Activated CD4-positive, alpha-beta T cell treated with anti-CD3 and anti-CD28 coated beads for 36 hours (primary cell): ENCODE measurements at regions of chr9 and their contacts with region 1.

Region 1: DNA sequence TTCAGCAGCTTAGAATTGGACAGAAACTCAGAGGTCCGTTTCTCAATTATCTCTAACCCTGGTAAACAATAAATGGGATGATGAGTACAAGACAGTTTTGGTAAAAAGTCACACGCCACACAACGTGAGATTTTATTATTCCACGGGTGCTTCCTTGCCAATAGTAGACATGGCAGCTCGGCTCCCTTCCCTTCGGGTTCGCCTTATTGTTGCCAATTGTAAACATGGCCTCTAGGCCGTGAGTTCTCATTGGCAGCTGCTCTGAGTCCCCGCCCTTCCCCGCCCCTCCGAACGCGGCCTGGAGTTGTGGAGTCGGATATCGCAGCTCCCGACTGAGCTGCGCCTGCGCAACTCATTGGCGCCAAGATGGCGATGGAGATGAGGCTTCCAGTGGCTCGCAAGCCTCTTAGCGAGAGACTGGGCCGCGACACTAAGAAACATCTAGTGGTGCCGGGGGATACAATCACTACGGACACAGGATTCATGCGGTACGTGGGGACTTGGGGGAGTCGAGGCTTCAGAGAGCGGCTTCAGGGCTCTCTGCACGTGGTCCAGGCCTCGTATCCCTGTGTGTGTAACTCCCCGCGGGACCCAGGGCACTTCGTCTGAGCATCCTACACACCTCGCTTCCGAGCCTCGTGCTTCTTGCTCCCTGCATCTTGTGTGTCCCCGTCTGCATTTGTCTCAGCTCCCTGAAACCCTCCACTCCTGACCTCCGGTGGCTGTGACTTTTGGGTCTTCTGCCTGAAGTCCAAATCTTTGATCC is at the start of gene EXOSC2:
- DNase-seq: peak; percentile 99
- ATAC-seq: peak; percentile 98
- H3K4me3 Mint-ChIP-seq: peak within 1 kb of the TSS; percentile 97
- H3K27ac Mint-ChIP-seq: peak within 1 kb of the TSS; percentile 98
- H3K4me1 Mint-ChIP-seq: peaks cover 44% of the 10 kb centered on the region
- H3K27me3 Mint-ChIP-seq: no peaks in the 10 kb centered on the region
- total RNA-seq, gene EXOSC2: 67.9 to 86.0 TPM

Region 2: GRCh38 chr9:129823935-129824601 is 869.5 kb before region 1 on chr9 and contains the start of gene TOR1A:
- CTCF ChIA-PET with region 1: no interaction called
- POLR2A ChIA-PET with region 1: no interaction called
- intact Hi-C with region 1: loop called in 1 of 2 experiments (anchors 1 kb)
- DNase-seq: peak; percentile 97
- ATAC-seq: peak; percentile 93
- H3K4me3 Mint-ChIP-seq: peak within 1 kb of the TSS; percentile 82
- H3K27ac Mint-ChIP-seq: peak within 1 kb of the TSS; percentile 63
- H3K4me1 Mint-ChIP-seq: peaks cover 14% of the 10 kb centered on the region
- H3K27me3 Mint-ChIP-seq: no peaks in the 10 kb centered on the region
- total RNA-seq, gene TOR1A: 34.9 to 39.7 TPM

Region 3: DNA sequence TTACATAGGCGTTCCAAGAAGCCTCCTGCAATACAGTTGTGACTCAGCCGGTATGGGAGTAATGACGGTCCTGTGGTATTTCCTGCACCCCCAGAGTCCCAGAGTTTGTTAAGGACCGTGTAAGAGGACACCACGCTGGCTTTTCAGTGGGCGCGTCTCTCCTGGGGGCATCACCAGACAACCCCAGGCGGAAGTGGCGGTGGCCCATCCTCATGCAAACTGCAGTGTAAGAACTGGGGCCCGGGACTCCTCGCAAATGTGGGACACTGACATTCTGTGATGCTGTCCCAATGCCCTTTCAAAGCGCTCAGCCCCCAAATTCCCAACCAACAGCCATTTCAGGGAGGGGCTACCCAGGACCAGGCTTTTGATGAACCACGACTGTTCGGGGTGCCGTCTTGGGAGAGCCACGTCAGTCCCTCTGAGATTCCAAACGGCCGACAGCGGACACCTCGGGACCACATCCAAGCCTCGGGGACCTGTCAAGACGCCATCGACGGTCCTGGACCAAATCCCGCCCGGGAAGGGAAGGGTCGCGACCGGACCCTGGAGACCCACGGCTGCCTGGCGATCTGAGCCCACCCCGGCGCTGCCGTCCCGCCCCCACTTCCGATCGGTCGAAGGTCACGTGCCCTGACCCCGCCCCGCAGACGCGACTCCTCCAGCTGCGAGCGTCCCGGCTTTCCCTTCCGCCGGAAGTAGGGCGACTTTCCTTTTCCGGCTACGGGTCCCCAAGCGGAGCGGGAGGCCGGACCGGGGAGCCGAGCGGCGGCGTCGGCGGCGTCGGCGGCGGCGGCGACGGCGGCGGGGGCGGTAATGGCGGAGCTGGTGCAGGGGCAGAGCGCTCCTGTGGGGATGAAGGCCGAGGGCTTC is 114.5 kb before region 1 on chr9 and contains the start of gene FUBP3:
- CTCF ChIA-PET with region 1: interaction called, 3 read pairs
- POLR2A ChIA-PET with region 1: interaction called, 3 read pairs
- intact Hi-C with region 1: loop called in 1 of 2 experiments (anchors 1 kb)
- DNase-seq: peak; percentile 96
- ATAC-seq: peak; percentile 94
- H3K4me3 Mint-ChIP-seq: peak within 1 kb of the TSS; percentile 90
- H3K27ac Mint-ChIP-seq: peak within 1 kb of the TSS; percentile 89
- H3K4me1 Mint-ChIP-seq: peaks cover 32% of the 10 kb centered on the region
- H3K27me3 Mint-ChIP-seq: no peaks in the 10 kb centered on the region
- total RNA-seq, gene FUBP3: 36.4 to 38.5 TPM

Region 4: GRCh38 chr9:130682490-130683121 is 11.0 kb before region 1 on chr9:
- CTCF ChIA-PET with region 1: interaction called, 26 read pairs
- POLR2A ChIA-PET with region 1: interaction called, 3 read pairs
- intact Hi-C with region 1: no loop called
- DNase-seq: peak; percentile 78
- ATAC-seq: peak; percentile 30
- H3K4me3 Mint-ChIP-seq: peak overlapping the region; percentile 81
- H3K27ac Mint-ChIP-seq: peak overlapping the region; percentile 77
- H3K4me1 Mint-ChIP-seq: peaks cover 5% of the 10 kb centered on the region
- H3K27me3 Mint-ChIP-seq: peaks cover 4% of the 10 kb centered on the region

Region 5: GRCh38 chr9:130707225-130707976 is 13.8 kb after region 1 on chr9:
- CTCF ChIA-PET with region 1: interaction called, 35 read pairs
- POLR2A ChIA-PET with region 1: interaction called, 9 read pairs
- intact Hi-C with region 1: loop called (anchors 1 to 2 kb)
- DNase-seq: peak; percentile 82
- ATAC-seq: peak; percentile 33
- H3K4me3 Mint-ChIP-seq: no peak overlapping the region
- H3K27ac Mint-ChIP-seq: no peak overlapping the region
- H3K4me1 Mint-ChIP-seq: peaks cover 5% of the 10 kb centered on the region
- H3K27me3 Mint-ChIP-seq: no peaks in the 10 kb centered on the region

Region 6: GRCh38 chr9:130741831-130742449 is 48.3 kb after region 1 on chr9:
- CTCF ChIA-PET with region 1: no interaction called
- POLR2A ChIA-PET with region 1: no interaction called
- intact Hi-C with region 1: no loop called
- DNase-seq: peak; percentile 31
- ATAC-seq: peak; percentile 90
- H3K4me3 Mint-ChIP-seq: no peak overlapping the region
- H3K27ac Mint-ChIP-seq: no peak overlapping the region
- H3K4me1 Mint-ChIP-seq: peaks cover 7% of the 10 kb centered on the region
- H3K27me3 Mint-ChIP-seq: no peaks in the 10 kb centered on the region

Region 7: GRCh38 chr9:131046581-131047202 is 353.1 kb after region 1 on chr9:
- CTCF ChIA-PET with region 1: no interaction called
- POLR2A ChIA-PET with region 1: no interaction called
- intact Hi-C with region 1: loop called in 1 of 2 experiments (anchors 5 kb)
- DNase-seq: peak; percentile 86
- ATAC-seq: peak; percentile 89
- H3K4me3 Mint-ChIP-seq: no peak overlapping the region
- H3K27ac Mint-ChIP-seq: no peak overlapping the region
- H3K4me1 Mint-ChIP-seq: peaks cover 10% of the 10 kb centered on the region
- H3K27me3 Mint-ChIP-seq: peaks cover 3% of the 10 kb centered on the region

Region 8: DNA sequence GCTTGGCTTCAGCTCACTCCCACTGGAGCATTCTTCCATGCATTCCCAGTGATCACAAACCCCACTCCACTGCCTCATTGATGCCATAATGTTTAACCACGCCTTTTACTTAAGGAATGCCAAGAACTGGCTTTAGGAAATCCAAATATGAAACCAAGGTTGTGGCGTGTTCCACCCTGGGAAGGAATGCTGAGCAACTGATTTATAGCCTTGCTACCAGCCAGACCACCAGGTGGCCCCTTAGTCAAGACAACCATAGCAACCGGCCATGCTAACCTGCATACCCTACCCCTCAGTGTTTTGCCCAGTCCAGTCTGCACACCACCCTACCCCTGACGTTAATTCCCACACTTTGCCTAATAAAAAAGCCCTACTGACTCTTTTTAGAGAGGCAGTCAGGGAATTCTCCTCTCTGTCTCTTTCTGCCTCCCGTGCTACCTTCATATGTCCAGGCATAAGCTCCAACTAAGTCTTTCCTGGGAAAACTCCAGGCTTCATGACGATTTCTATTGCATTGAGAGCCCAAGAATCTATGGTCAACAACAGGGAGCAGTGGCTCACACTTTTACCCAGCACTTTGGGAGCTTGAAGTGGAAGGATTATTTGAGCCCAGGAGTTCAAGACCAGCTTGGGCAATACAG is 673.3 kb after region 1 on chr9:
- CTCF ChIA-PET with region 1: no interaction called
- POLR2A ChIA-PET with region 1: no interaction called
- intact Hi-C with region 1: loop called in 1 of 2 experiments (anchors 5 kb)
- DNase-seq: no peak
- ATAC-seq: no peak
- H3K4me3 Mint-ChIP-seq: no peak overlapping the region
- H3K27ac Mint-ChIP-seq: no peak overlapping the region
- H3K4me1 Mint-ChIP-seq: peaks cover under 1% of the 10 kb centered on the region
- H3K27me3 Mint-ChIP-seq: no peaks in the 10 kb centered on the region